ENCODE measurements at regions of chr10 and their contacts with region 1.

Region 1: GRCh38 chr10:27558612-27559020 is 54.5 kb downstream of the RAB18 start:
- DNase-seq: peak; percentile 81
- H3K4me3 Mint-ChIP-seq: no peak overlapping the region
- H3K27ac Mint-ChIP-seq: no peak overlapping the region
- H3K4me1 Mint-ChIP-seq: no peaks in the 10 kb centered on the region
- H3K27me3 Mint-ChIP-seq: no peaks in the 10 kb centered on the region
- CTCF ChIP-seq: peak; percentile 91

Region 2: GRCh38 chr10:27369880-27370279 is 188.7 kb before region 1 on chr10:
- CTCF ChIA-PET with region 1: interaction called, 4 read pairs
- POLR2A ChIA-PET with region 1: interaction called, 4 read pairs
- intact Hi-C with region 1: loop called (anchors 5 kb)
- DNase-seq: peak; percentile 24
- H3K4me3 Mint-ChIP-seq: no peak overlapping the region
- H3K27ac Mint-ChIP-seq: no peak overlapping the region
- H3K4me1 Mint-ChIP-seq: peaks cover 22% of the 10 kb centered on the region
- H3K27me3 Mint-ChIP-seq: no peaks in the 10 kb centered on the region
- CTCF ChIP-seq: peak; percentile 40

Region 3: DNA sequence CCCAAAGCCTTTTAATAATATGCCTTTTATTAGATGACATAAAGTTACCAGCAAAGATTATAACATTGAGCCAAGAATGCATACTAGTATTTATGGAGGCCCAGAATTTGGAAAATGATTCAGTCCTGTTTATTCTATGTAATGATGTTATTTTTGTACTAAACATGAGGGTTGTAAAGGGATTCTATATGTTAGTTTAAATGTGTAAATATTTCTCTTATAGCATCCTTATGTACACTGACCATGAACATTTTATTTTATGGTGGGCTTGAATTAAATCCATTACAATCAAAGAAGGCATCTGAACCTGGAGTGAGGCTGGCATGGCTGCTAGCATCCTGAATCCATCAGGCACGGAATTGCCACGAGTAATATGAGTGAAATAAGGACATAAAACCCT is 25.7 kb after region 1 on chr10:
- CTCF ChIA-PET with region 1: no interaction called
- POLR2A ChIA-PET with region 1: no interaction called
- intact Hi-C with region 1: no loop called
- DNase-seq: no peak
- H3K4me3 Mint-ChIP-seq: no peak overlapping the region
- H3K27ac Mint-ChIP-seq: no peak overlapping the region
- H3K4me1 Mint-ChIP-seq: no peaks in the 10 kb centered on the region
- H3K27me3 Mint-ChIP-seq: no peaks in the 10 kb centered on the region
- CTCF ChIP-seq: no peak

Region 4: DNA sequence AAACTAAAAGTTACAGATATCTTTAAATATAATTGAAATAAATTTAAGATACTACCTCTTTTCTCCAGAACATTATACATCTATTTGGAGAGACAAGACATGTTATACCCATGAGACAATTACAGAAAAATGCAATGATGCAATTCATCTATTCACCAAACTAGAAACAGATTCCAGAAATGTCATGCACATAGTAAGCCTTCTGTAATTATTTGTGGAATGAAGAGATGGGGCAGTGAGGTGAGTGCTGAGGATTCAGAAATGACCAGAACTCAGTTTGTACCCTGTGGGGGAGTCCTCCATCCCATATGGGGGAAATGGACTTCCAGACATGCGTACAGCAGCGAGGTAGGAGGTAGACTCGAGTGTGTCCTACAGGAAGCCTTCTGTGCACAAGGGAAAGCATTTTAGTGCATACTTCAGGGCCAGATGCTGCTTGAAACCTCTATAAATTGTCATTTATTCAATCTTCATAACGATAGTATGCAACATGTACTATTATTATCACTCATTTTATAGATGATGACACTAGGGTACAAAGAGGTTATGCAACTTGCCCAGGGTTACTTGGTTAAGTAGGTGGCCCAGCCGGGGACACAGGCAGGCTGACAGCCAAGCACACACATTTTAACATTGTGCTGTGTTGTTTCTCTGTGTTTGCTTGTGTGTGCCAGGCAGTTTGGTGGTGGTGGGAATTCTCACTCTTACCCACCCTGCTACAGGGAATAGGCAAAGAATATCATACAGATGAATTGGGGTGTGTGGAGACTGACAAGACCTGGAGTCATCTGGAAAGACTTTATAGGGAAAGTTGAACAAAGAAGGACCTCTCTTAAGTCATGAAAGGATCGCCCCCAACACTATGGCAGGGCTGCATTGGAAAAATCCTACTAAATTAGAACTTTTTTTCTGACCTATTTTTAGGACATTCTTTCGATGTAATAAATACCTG is 87.9 kb after region 1 on chr10:
- CTCF ChIA-PET with region 1: interaction called, 10 read pairs
- POLR2A ChIA-PET with region 1: no interaction called
- intact Hi-C with region 1: no loop called
- DNase-seq: peak; percentile 6
- H3K4me3 Mint-ChIP-seq: no peak overlapping the region
- H3K27ac Mint-ChIP-seq: no peak overlapping the region
- H3K4me1 Mint-ChIP-seq: peaks cover 17% of the 10 kb centered on the region
- H3K27me3 Mint-ChIP-seq: no peaks in the 10 kb centered on the region
- CTCF ChIP-seq: no peak

Region 5: DNA sequence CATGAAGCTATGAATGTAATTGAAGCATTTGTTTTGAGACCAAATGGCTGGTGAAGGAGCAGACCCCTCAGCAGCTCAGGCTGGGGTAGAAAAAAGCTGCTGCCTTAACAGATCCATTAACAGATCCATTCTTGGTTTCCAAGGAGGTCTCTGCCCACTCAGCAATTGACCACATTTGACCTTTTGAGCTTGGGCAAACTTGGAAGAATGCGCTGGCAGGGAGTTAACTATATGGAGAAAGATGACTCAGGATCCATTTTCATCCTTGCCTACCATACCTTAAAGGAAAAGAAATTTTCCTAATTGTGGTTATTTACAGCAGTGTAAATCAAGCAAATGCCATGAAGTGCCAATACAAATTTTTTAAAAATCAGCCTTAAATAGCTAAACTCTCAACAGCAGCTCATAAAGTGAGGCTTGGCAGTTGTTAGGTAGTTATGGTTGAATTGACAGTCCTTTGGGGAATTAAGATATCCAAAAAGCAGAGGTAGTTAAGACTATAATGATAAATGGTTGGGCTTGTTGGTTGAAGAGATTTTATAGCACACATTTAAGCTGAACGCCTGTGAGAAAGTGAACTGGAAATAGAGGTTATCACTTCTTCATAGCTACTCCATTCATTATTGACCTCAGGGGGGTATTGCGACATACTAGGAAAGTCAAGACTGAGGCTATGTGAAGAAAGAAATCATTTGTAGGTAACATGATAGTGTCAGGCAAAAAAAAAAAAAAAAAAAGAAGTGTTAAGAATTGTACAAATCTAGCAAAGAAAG is 103.1 kb after region 1 on chr10:
- CTCF ChIA-PET with region 1: interaction called, 7 read pairs
- POLR2A ChIA-PET with region 1: no interaction called
- intact Hi-C with region 1: loop called (anchors 1 kb)
- DNase-seq: peak; percentile 16
- H3K4me3 Mint-ChIP-seq: no peak overlapping the region
- H3K27ac Mint-ChIP-seq: no peak overlapping the region
- H3K4me1 Mint-ChIP-seq: peaks cover 14% of the 10 kb centered on the region
- H3K27me3 Mint-ChIP-seq: no peaks in the 10 kb centered on the region
- CTCF ChIP-seq: no peak

Region 6: DNA sequence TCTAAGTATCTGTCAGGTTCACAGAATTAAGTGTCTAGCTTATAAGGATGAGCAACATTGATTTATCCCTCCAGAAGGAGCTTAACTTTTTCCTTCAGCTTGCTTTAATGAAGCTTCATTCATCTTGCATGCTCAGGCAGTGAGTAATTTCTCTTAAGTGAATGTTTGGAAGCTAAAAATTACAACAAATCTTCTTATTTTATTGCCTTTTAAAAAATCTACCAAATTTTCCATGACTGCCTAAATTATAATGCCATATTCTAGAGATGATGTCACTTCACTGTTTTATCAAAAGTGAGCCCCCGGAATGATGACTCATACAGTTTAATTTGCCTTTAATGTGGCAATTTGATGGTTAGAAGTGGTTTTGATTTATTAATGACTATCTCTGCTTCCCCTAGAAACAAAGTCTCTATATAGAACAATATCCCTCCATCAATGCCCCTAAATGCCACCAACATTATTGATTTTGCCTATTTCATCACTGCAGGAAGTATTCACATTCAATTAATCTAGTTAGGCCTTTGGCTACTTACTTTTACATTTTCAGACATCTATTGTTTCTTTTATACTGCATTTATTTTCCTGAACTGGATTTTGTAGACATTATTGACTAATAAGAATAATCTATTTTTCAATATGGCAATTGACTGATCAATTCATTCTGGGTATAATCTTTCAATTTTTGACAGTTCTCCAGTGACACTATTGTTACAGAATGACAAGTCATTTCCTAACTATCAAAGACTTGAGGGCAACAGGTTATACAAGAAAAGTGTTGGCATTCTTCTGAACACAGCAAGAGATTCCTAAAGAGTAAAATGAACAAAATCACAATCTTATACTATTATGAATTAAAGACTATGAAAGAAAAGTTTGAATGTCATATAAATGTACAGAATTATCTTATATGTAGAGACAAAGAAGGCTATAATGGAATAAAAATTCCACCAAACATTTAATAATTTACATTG is 579.6 kb after region 1 on chr10:
- CTCF ChIA-PET with region 1: no interaction called
- POLR2A ChIA-PET with region 1: no interaction called
- intact Hi-C with region 1: loop called (anchors 5 kb)
- DNase-seq: no peak
- H3K4me3 Mint-ChIP-seq: no peak overlapping the region
- H3K27ac Mint-ChIP-seq: no peak overlapping the region
- H3K4me1 Mint-ChIP-seq: no peaks in the 10 kb centered on the region
- H3K27me3 Mint-ChIP-seq: no peaks in the 10 kb centered on the region
- CTCF ChIP-seq: no peak

Region 7: DNA sequence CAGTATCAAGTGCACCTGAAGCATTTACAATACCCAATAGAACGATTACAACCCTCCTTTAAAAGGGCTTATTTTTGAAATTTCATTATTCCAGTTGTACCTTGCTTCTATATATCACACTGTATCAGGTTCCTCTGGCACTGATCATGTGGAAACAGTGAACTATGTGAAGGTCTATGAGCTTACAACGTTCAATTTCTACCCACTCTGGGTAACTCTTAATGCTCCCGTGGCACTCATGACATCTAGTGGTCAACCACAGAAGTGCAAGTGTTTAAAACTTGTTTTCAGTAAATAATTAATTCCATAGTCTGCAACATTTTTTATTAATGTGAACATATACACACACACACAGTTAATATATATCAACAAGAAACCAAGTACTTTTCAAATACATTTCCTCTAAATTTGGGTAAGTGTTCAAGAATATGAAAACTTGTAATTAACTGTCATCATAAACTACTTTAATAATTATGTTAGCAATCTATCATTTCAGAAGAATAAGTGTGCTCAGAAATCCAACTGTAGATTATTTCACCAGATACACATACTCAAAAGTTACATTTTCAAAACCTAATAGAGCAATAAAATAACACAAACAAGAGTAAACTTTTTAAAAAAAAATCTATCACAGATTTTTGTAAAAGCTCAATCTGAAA is 683.3 kb after region 1 on chr10:
- CTCF ChIA-PET with region 1: interaction called, 12 read pairs
- POLR2A ChIA-PET with region 1: no interaction called
- intact Hi-C with region 1: loop called (anchors 2 kb)
- DNase-seq: peak; percentile 64
- H3K4me3 Mint-ChIP-seq: no peak overlapping the region
- H3K27ac Mint-ChIP-seq: no peak overlapping the region
- H3K4me1 Mint-ChIP-seq: peaks cover 5% of the 10 kb centered on the region
- H3K27me3 Mint-ChIP-seq: no peaks in the 10 kb centered on the region
- CTCF ChIP-seq: peak; percentile 75

Region 8: GRCh38 chr10:28393966-28394568 is 835.5 kb after region 1 on chr10:
- CTCF ChIA-PET with region 1: interaction called, 4 read pairs
- POLR2A ChIA-PET with region 1: no interaction called
- intact Hi-C with region 1: loop called (anchors 10 kb)
- DNase-seq: peak; percentile 76
- H3K4me3 Mint-ChIP-seq: no peak overlapping the region
- H3K27ac Mint-ChIP-seq: no peak overlapping the region
- H3K4me1 Mint-ChIP-seq: peaks cover 5% of the 10 kb centered on the region
- H3K27me3 Mint-ChIP-seq: no peaks in the 10 kb centered on the region
- CTCF ChIP-seq: peak; percentile 86

Measured in MCF 10A (cell line).